GM12878 (cell line): ENCODE measurements at regions of chr18 and their contacts with region 1.

Region 1: GRCh38 chr18:4319738-4320677 is 135.1 kb downstream of the DLGAP1 start:
- DNase-seq: peak; percentile 64
- ATAC-seq: peak; percentile 91
- H3K4me3 ChIP-seq: no peak overlapping the region
- H3K27ac ChIP-seq: no peak overlapping the region; the same call in 1 of the 2 replicates
- H3K4me1 ChIP-seq: no peaks in the 10 kb centered on the region
- H3K27me3 ChIP-seq: no peaks in the 10 kb centered on the region
- CTCF ChIP-seq: no peak
- EP300 ChIP-seq: peak; percentile 88 to 90; a peak in 3 of 4 replicates
- POLR2A ChIP-seq: no peak
- RAD21 ChIP-seq: no peak

Region 2: DNA sequence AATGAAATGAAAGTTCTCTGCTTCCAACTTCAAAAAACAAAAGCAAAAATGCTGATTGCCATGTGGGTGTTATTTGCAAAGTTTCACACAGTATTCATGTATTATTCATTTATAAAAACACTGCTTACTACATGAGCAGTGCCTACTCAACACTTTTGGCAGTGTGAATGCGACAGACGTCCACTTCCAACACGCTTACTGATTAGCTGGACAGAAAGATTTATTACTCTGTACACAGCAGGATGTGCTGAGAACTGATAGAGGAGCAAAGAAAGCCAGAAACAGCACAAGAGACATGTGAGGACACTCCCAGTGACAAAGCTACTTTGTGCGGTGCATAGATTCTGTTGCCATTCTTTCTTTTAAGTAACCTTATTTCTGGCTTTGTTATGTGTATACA is 123.7 kb before region 1 on chr18:
- CTCF ChIA-PET with region 1: no interaction called
- POLR2A ChIA-PET with region 1: no interaction called
- RAD21 ChIA-PET with region 1: no interaction called
- SMC1A ChIA-PET with region 1: no interaction called
- in situ Hi-C with region 1: no loop called
- intact Hi-C with region 1: no loop called
- DNase-seq: no peak
- ATAC-seq: no peak
- H3K4me3 ChIP-seq: no peak overlapping the region
- H3K27ac ChIP-seq: no peak overlapping the region
- H3K4me1 ChIP-seq: no peaks in the 10 kb centered on the region
- H3K27me3 ChIP-seq: no peaks in the 10 kb centered on the region
- CTCF ChIP-seq: no peak
- EP300 ChIP-seq: no peak
- POLR2A ChIP-seq: no peak
- RAD21 ChIP-seq: no peak

Region 3: DNA sequence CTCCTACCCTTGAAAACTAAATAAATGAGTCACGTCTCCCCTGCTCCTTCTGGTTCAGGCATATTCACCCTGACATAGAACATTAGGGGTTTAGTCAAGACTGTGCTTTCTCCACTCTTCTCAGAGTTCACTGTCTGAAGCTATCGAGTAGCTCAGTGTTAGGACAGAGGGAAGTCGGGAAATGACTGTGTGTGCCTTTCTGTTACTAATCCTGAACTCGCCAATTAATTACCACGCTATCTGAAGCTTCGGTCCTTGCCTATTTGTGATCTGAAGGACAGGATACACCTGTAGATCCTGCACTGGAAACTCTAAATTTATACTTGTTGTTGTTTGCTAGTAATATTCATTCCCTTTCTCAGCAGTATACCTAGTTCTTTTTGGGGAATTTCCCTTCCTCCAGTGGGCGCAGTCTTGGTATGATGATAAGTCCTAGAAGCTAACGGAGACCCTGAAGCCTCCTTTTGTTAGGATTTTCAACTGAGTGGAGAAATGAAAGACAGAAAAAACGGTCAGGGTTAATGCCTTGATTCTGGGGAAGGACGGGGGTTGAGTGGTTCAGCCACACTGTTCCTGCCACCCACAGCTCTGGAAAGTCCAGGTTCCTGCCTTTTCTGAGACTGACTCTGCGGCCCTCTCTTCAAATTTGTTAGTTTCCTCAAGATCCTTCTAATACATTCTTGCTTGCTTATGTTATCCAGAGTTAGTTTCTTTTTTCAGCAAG is 82.9 kb before region 1 on chr18:
- CTCF ChIA-PET with region 1: interaction called, 3 read pairs
- POLR2A ChIA-PET with region 1: no interaction called
- RAD21 ChIA-PET with region 1: interaction called, 7 read pairs
- SMC1A ChIA-PET with region 1: interaction called, 10 read pairs
- in situ Hi-C with region 1: no loop called
- intact Hi-C with region 1: no loop called
- DNase-seq: no peak
- ATAC-seq: peak; percentile 77
- H3K4me3 ChIP-seq: no peak overlapping the region
- H3K27ac ChIP-seq: no peak overlapping the region
- H3K4me1 ChIP-seq: no peaks in the 10 kb centered on the region
- H3K27me3 ChIP-seq: no peaks in the 10 kb centered on the region
- CTCF ChIP-seq: no peak
- EP300 ChIP-seq: peak; percentile 28 to 41; a peak in 1 of 4 replicates
- POLR2A ChIP-seq: no peak
- RAD21 ChIP-seq: no peak

Region 4: DNA sequence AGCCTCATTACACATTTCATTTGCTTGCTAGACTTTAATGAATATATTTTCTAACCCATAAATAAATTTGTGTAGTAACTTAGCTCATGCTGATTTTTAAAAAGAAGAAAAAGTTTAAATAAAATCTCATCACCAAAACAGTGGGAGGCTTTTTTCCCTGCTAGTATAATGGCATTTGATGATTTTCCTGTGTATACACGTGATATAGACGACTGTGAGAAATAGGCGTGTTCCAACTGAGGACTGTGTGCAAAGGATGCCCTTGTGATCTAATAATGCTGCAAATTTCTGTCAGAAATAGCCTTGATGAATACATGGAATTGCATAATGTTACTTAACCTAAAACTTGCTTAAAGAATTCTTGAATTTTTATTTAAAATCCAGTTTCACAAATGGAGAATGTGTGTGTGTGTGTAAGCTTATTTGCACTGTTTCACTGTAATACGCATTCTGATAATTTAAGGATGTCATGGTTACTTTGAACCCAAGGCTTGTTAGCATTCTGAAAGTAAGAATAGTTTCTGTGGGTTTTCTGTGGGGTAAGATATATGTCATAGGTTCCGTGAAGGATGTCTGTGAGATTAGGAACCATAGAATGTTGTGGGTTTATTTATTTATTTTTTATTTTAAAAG is 42.9 kb before region 1 on chr18:
- CTCF ChIA-PET with region 1: interaction called, 4 read pairs
- POLR2A ChIA-PET with region 1: interaction called, 3 read pairs
- RAD21 ChIA-PET with region 1: interaction called, 9 read pairs
- SMC1A ChIA-PET with region 1: interaction called, 56 read pairs
- in situ Hi-C with region 1: loop called (anchors 5 kb)
- intact Hi-C with region 1: loop called (anchors 5 kb)
- DNase-seq: no peak
- ATAC-seq: peak; percentile 85
- H3K4me3 ChIP-seq: no peak overlapping the region
- H3K27ac ChIP-seq: no peak overlapping the region
- H3K4me1 ChIP-seq: no peaks in the 10 kb centered on the region
- H3K27me3 ChIP-seq: no peaks in the 10 kb centered on the region
- CTCF ChIP-seq: no peak
- EP300 ChIP-seq: peak; percentile 90 to 94; a peak in 3 of 4 replicates
- POLR2A ChIP-seq: no peak
- RAD21 ChIP-seq: no peak

Region 5: GRCh38 chr18:4293337-4293736 is 26.7 kb before region 1 on chr18:
- CTCF ChIA-PET with region 1: no interaction called
- POLR2A ChIA-PET with region 1: interaction called, 8 read pairs
- RAD21 ChIA-PET with region 1: interaction called, 8 read pairs
- SMC1A ChIA-PET with region 1: interaction called, 36 read pairs
- in situ Hi-C with region 1: no loop called
- intact Hi-C with region 1: no loop called
- DNase-seq: no peak
- ATAC-seq: peak; percentile 88
- H3K4me3 ChIP-seq: no peak overlapping the region
- H3K27ac ChIP-seq: no peak overlapping the region
- H3K4me1 ChIP-seq: no peaks in the 10 kb centered on the region
- H3K27me3 ChIP-seq: no peaks in the 10 kb centered on the region
- CTCF ChIP-seq: no peak
- EP300 ChIP-seq: 0 out of 4 replicates have a peak, but pooled peaks of 1 of the 2 experiments have one; percentile 9
- POLR2A ChIP-seq: no peak
- RAD21 ChIP-seq: no peak

Region 6: DNA sequence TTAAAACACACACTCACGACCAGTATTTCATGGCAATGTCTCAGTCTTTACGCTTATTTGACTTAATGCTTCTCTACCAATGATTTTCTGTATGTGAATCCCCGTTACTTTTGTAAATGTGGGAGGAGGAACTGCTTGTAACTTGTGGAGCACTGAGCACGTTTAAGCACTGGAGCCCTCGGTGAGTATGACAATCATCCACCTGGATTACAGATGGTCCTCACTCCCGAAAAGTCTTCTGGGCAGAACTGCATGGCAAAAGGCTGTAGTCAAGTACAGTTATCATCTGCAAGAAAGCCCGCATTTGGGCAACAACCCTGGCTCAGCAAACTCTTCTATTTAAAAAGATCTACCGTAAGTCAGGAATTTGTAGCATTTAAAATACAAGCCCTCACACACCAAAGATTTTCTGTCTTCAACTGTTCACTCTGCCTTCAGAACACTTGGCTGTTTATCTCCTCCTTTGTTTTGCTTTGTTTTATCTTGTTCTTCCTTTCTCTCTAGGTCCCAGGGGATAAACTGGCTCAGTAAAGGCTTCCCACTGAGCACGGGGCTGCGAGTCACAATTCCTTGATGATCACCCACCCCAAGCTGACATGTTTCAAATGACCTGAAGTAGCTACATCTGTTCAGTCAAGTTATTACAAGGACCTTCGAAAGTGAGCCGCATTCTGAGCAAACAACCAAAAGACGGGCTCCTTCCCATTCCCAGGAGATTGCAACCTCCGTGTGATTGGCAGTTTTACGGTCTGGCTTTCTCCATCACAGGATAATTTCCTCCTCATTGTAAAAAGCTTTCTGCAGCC is 32.9 kb after region 1 on chr18:
- CTCF ChIA-PET with region 1: interaction called, 5 read pairs
- POLR2A ChIA-PET with region 1: interaction called, 8 read pairs
- RAD21 ChIA-PET with region 1: interaction called, 14 read pairs
- SMC1A ChIA-PET with region 1: interaction called, 15 read pairs
- in situ Hi-C with region 1: no loop called
- intact Hi-C with region 1: loop called (anchors 2 kb)
- DNase-seq: no peak
- ATAC-seq: peak; percentile 8
- H3K4me3 ChIP-seq: no peak overlapping the region
- H3K27ac ChIP-seq: no peak overlapping the region
- H3K4me1 ChIP-seq: no peaks in the 10 kb centered on the region
- H3K27me3 ChIP-seq: no peaks in the 10 kb centered on the region
- CTCF ChIP-seq: no peak
- EP300 ChIP-seq: no peak
- POLR2A ChIP-seq: no peak
- RAD21 ChIP-seq: no peak

Region 7: DNA sequence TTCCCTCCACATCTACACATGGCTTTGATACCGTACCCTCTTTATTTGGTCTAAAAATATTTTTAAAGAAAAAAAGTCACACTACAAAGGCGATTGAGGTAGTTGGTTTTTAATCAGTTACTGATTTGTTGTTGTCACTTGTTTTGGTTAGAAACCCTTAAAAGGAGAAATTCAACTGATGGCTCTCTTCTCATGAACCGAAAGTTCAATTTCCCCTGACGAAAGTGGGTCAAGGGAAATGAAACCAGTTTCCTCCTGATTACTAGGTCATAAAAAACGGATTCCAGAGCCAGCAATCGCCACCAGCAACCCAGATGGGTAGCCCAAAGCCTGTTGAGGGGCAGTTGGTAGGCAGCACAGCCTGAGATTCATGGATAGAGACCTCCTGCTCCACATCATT is 71.9 kb after region 1 on chr18:
- CTCF ChIA-PET with region 1: interaction called, 4 read pairs
- POLR2A ChIA-PET with region 1: interaction called, 4 read pairs
- RAD21 ChIA-PET with region 1: interaction called, 6 read pairs
- SMC1A ChIA-PET with region 1: interaction called, 12 read pairs
- in situ Hi-C with region 1: no loop called
- intact Hi-C with region 1: loop called (anchors 2 kb)
- DNase-seq: peak; percentile 60
- ATAC-seq: peak; percentile 65
- H3K4me3 ChIP-seq: no peak overlapping the region
- H3K27ac ChIP-seq: 0 out of 2 replicates have a peak overlapping the region, but pooled peaks have one; percentile 20
- H3K4me1 ChIP-seq: no peaks in the 10 kb centered on the region
- H3K27me3 ChIP-seq: no peaks in the 10 kb centered on the region
- CTCF ChIP-seq: no peak
- EP300 ChIP-seq: peak; percentile 96 to 99
- POLR2A ChIP-seq: no peak
- RAD21 ChIP-seq: no peak

Region 8: GRCh38 chr18:4455113-4455811 is 135.3 kb after region 1 on chr18 and contains the start of gene DLGAP1:
- CTCF ChIA-PET with region 1: interaction called, 4 read pairs
- POLR2A ChIA-PET with region 1: interaction called, 4 read pairs
- RAD21 ChIA-PET with region 1: interaction called, 27 read pairs
- SMC1A ChIA-PET with region 1: interaction called, 5 read pairs
- in situ Hi-C with region 1: no loop called
- intact Hi-C with region 1: loop called (anchors 5 kb)
- DNase-seq: no peak
- ATAC-seq: peak; percentile 85
- H3K4me3 ChIP-seq: no peak within 1 kb of the TSS
- H3K27ac ChIP-seq: no peak within 1 kb of the TSS
- H3K4me1 ChIP-seq: no peaks in the 10 kb centered on the region
- H3K27me3 ChIP-seq: no peaks in the 10 kb centered on the region; a peak in 1 of 4 replicates
- CTCF ChIP-seq: peak in 1 of 3 experiments; percentile 23; a peak in 1 of 6 replicates
- EP300 ChIP-seq: no peak
- POLR2A ChIP-seq: 0 out of 2 replicates have a peak, but pooled peaks have one; percentile 23
- RAD21 ChIP-seq: no peak
- polyA plus RNA-seq, gene DLGAP1: 0.23 to 0.60 TPM

Region 9: DNA sequence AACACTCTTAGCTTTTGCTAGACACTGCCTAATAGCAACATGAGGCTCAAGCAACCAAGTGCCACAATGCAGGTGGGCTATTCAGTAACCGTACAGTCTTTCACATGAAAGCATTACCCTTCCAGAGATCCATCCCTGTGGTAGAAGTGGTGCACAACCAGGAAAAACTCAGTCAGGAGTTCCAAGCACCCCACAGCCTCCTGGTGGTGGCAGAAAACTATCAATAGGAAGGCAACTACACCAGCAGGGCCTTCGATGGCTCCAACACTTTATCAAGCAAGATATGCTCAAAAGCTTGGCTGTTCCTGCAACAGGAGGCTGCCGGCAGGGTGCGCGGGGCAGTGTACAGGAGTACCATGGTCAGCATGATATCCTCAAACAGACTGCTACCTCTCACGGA is 311.2 kb after region 1 on chr18:
- CTCF ChIA-PET with region 1: no interaction called
- POLR2A ChIA-PET with region 1: no interaction called
- RAD21 ChIA-PET with region 1: no interaction called
- SMC1A ChIA-PET with region 1: no interaction called
- in situ Hi-C with region 1: no loop called
- intact Hi-C with region 1: no loop called
- DNase-seq: no peak
- ATAC-seq: no peak
- H3K4me3 ChIP-seq: no peak overlapping the region
- H3K27ac ChIP-seq: no peak overlapping the region
- H3K4me1 ChIP-seq: no peaks in the 10 kb centered on the region
- H3K27me3 ChIP-seq: no peaks in the 10 kb centered on the region
- CTCF ChIP-seq: no peak
- EP300 ChIP-seq: no peak
- POLR2A ChIP-seq: no peak
- RAD21 ChIP-seq: no peak